T-cell (primary cell): ENCODE measurements at regions of chr7 and their contacts with region 1.

Region 1: DNA sequence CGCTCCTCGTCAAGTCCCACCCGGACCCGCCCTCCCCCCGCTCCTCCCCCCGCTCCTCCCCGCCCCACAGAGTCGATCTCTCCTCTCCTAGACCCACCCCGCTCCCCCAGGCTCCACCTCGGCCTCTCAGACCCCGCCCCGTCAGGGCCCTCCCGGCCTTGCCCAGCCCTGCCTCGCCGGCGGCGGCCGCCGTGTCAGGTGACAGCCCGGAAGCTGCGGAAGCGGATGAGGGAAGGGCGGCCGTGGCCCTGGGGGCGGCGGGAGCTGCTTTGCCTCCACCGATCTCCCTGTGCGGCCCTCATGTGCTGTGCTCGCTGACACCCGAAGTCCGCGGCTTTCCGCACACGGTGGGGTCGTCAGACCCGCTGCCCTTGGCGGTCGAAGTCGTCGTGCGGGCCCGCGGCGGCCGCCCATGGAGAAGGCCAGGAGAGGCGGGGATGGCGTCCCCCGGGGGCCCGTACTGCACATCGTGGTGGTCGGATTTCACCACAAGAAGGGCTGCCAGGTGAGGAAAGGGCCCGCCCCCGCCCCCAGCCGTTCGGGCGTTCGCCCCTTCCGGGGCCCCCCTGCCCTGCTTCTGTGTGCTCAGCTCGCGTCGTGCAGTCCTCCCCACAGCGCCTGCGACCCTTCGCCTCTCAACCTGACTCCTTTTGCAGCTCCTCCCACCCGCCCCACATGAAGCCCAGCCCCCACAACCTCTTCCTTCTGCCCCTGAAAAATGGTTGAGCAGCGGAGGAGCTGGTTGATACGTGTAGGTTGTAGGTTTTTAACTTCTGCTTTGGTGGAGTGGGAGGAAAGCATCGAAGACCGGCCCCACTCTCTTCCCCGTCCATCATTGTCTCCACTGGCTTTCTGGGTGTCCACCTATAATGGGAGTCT is at the start of gene AVL9:
- DNase-seq: peak; percentile 97 to 100 (median 99)
- ATAC-seq: peak; percentile 93 to 97 (median 96)
- H3K4me3 ChIP-seq: peak within 1 kb of the TSS; percentile 68 to 79
- H3K4me3 Mint-ChIP-seq: peak within 1 kb of the TSS; percentile 90 to 98 (median 91)
- H3K27ac ChIP-seq: peak within 1 kb of the TSS; percentile 80
- H3K27ac Mint-ChIP-seq: peak within 1 kb of the TSS; percentile 95 to 96
- H3K4me1 ChIP-seq: peaks cover 12 to 17% of the 10 kb centered on the region in 2 experiments
- H3K4me1 Mint-ChIP-seq: peaks cover 46 to 55% (median 48%) of the 10 kb centered on the region in 3 donors
- H3K27me3 ChIP-seq: no peaks in the 10 kb centered on the region
- H3K27me3 Mint-ChIP-seq: no peaks in the 10 kb centered on the region
- total RNA-seq, gene AVL9: 39.3 to 44.9 (median 39.7) TPM

Region 2: GRCh38 chr7:31488562-31489203 is 1006.9 kb before region 1 on chr7:
- CTCF ChIA-PET with region 1: no interaction called
- POLR2A ChIA-PET with region 1: no interaction called
- DNase-seq: peak in 3 of 35 experiments; percentile 0 to 3 (median 2)
- ATAC-seq: no peak
- H3K4me3 ChIP-seq: no peak overlapping the region
- H3K4me3 Mint-ChIP-seq: no peak overlapping the region
- H3K27ac ChIP-seq: no peak overlapping the region
- H3K27ac Mint-ChIP-seq: no peak overlapping the region
- H3K4me1 ChIP-seq: no peaks in the 10 kb centered on the region
- H3K4me1 Mint-ChIP-seq: no peaks in the 10 kb centered on the region
- H3K27me3 ChIP-seq: no peaks in the 10 kb centered on the region
- H3K27me3 Mint-ChIP-seq: no peaks in the 10 kb centered on the region

Region 3: DNA sequence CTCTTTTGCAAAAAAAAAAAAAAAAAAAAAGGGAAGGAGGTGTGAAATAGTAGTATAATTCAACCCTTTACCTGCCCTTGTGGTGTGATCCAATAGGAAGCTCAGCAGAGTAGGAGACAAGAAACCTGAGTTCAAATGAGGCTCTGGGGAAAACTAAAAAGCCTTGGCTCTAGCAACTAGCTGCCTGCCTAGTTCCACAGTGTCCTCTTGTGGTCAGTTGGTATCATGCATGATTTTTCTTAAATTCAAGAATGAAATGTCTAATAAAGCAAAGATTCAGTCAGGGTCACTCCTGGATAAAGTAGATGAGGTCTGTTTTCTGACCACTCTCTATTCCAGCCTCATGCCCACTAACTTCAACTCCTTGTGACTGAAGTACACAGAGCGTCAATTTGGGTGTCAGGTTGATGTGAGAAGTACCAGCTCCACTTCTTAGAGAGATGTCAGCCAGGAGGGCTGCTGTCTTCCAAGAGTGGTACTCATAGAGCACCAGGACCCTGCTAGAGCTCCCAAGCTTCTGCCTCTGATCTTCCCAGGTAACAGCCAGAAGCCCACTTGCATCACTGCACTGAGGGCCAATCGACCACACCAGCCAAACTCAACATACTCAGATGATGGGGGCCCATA is 15.8 kb before region 1 on chr7:
- CTCF ChIA-PET with region 1: interaction called, 3 to 10 read pairs
- POLR2A ChIA-PET with region 1: no interaction called
- DNase-seq: peak in 1 of 35 experiments; percentile 45
- ATAC-seq: no peak
- H3K4me3 ChIP-seq: no peak overlapping the region
- H3K4me3 Mint-ChIP-seq: no peak overlapping the region
- H3K27ac ChIP-seq: no peak overlapping the region
- H3K27ac Mint-ChIP-seq: no peak overlapping the region
- H3K4me1 ChIP-seq: no peaks in the 10 kb centered on the region
- H3K4me1 Mint-ChIP-seq: peaks cover 0 to 7% (median 0%) of the 10 kb centered on the region in 3 donors
- H3K27me3 ChIP-seq: no peaks in the 10 kb centered on the region
- H3K27me3 Mint-ChIP-seq: peaks cover under 1 to 4% of the 10 kb centered on the region in 2 donors

Region 4: DNA sequence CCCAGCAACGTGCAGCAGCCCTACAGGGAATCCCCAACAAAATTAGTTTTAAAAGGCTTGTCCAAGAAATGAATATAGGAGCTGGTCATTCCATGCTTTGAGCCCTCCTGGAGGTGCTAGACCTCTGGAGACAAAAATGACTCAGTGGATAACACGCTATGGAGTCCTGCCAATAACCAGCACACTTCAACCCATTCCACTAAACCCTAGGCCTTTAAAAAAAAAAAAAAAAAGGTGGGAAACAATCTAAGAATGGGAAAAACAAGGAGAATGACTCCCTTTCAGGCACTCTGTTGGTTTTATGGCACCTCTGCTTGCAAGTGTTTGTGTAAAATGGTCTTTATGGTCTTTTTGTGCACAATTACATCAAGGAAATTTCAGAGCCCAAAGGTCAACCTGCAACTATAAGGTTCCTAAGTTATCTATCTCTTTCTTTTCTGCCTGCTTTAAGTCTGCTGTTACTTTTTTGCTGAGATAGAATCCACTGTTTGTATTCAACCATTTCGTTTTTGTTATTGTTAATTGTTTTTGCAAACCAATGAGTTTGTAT is 21.1 kb after region 1 on chr7:
- CTCF ChIA-PET with region 1: interaction called, 3 to 10 read pairs
- POLR2A ChIA-PET with region 1: interaction called in 1 of 2 experiments, 5 read pairs
- DNase-seq: no peak
- ATAC-seq: no peak
- H3K4me3 ChIP-seq: no peak overlapping the region
- H3K4me3 Mint-ChIP-seq: peak overlapping the region in 1 of 3 donors; percentile 60
- H3K27ac ChIP-seq: no peak overlapping the region
- H3K27ac Mint-ChIP-seq: peak overlapping the region in 1 of 2 donors; percentile 5
- H3K4me1 ChIP-seq: peaks cover 12 to 30% of the 10 kb centered on the region in 2 experiments
- H3K4me1 Mint-ChIP-seq: peaks cover 63 to 69% (median 68%) of the 10 kb centered on the region in 3 donors
- H3K27me3 ChIP-seq: no peaks in the 10 kb centered on the region
- H3K27me3 Mint-ChIP-seq: no peaks in the 10 kb centered on the region

Region 5: DNA sequence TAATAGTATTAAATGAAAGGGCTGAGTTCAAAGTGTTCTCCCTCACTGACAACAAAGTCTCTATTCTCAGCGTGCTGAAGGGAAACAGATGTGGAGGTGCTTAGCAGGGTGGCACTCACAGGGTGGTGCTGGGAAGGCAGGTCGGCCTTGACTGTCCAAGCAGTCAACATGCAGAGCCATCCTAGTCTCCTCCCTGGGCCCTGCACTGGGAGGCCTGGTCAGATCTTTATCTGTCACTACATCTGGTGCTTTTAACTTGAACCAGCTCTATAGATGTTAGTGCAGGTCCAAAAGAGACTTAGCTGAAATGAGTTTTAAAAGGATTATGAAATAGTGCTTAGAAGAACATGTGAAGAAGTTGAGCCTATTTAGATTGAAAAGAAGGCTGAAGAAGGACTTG is 81.9 kb after region 1 on chr7:
- CTCF ChIA-PET with region 1: no interaction called
- POLR2A ChIA-PET with region 1: no interaction called
- DNase-seq: no peak
- ATAC-seq: no peak
- H3K4me3 ChIP-seq: no peak overlapping the region
- H3K4me3 Mint-ChIP-seq: no peak overlapping the region
- H3K27ac ChIP-seq: no peak overlapping the region
- H3K27ac Mint-ChIP-seq: no peak overlapping the region
- H3K4me1 ChIP-seq: no peaks in the 10 kb centered on the region
- H3K4me1 Mint-ChIP-seq: no peaks in the 10 kb centered on the region
- H3K27me3 ChIP-seq: no peaks in the 10 kb centered on the region
- H3K27me3 Mint-ChIP-seq: no peaks in the 10 kb centered on the region

Region 6: DNA sequence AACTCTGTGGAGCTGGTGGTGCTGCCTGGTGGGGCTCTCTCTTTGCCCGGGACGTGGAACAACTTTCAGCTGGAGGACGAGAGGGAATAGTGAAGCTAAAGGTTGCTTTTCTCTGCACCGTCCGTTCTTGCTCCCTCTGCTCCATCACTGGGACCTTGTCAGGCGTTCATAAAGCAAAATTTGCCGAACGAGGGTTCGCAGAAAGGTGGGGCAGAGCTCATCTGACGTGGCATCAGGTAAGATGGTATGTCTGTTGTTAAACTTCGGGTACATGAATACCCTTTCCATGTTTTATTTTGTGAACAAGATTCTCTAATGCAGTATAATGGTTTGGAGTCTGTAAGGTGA is 634.2 kb after region 1 on chr7:
- CTCF ChIA-PET with region 1: no interaction called
- POLR2A ChIA-PET with region 1: interaction called in 1 of 2 experiments, 11 read pairs
- DNase-seq: peak in 3 of 35 experiments; percentile 4 to 36 (median 15)
- ATAC-seq: peak; percentile 1 to 8 (median 3)
- H3K4me3 ChIP-seq: peak overlapping the region; percentile 90 to 94
- H3K4me3 Mint-ChIP-seq: peak overlapping the region; percentile 95 to 97 (median 96)
- H3K27ac ChIP-seq: peak overlapping the region; percentile 59
- H3K27ac Mint-ChIP-seq: peak overlapping the region; percentile 89 to 91
- H3K4me1 ChIP-seq: peaks cover 8 to 10% of the 10 kb centered on the region in 2 experiments
- H3K4me1 Mint-ChIP-seq: peaks cover 28 to 34% (median 29%) of the 10 kb centered on the region in 3 donors
- H3K27me3 ChIP-seq: no peaks in the 10 kb centered on the region
- H3K27me3 Mint-ChIP-seq: no peaks in the 10 kb centered on the region